CD8-positive, alpha-beta T cell (primary cell): ENCODE measurements at regions of chr22 and their contacts with region 1.

Region 1: DNA sequence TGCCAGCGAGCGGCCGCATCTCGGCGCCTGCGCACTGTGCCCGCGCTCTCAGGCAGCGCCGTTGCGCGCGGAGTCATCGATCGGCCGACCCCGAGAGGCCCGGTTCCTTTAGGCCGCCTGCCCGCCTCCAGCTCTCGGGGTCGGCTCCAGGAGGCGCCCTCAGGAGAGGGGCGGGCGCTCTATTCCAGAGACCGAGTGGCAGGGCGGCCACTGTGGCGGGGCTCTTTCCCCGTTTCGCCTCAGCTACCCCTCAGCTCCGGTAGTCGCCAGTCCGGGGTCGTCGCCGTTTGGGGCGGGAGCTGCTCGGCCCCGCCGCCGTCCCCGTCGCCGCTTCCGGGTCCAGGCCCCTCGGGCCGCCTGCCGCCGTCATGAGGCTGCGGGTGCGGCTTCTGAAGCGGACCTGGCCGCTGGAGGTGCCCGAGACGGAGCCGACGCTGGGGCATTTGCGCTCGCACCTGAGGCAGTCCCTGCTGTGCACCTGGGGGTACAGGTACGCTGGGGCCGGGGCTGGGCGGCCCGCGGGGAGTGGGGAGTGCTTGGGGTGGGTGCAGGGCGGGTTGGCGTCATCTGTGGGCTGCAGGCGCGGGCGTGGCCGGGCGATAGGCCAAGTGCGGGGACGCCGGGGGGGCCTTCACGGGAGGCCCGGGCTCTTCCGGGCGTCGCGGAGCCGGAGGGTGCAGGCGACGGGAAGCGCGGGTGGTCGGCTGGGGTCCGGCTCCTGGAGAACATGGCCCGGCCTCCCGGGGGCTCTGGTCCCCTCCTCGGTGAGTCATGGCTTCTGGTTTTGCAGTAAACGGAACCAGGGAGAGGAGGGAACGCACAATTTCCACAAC is at the start of gene FBXO7:
- DNase-seq: peak; percentile 70 to 95 (median 86)
- ATAC-seq: peak; percentile 86
- H3K4me3 ChIP-seq: peak within 1 kb of the TSS; percentile 83 to 91
- H3K4me3 Mint-ChIP-seq: peak within 1 kb of the TSS; percentile 90
- H3K27ac ChIP-seq: peak within 1 kb of the TSS; percentile 90 to 92
- H3K27ac Mint-ChIP-seq: peak within 1 kb of the TSS; percentile 96
- H3K4me1 ChIP-seq: peaks cover 39% of the 10 kb centered on the region
- H3K4me1 Mint-ChIP-seq: peaks cover 24% of the 10 kb centered on the region
- H3K27me3 ChIP-seq: no peaks in the 10 kb centered on the region
- H3K27me3 Mint-ChIP-seq: no peaks in the 10 kb centered on the region
- CTCF ChIP-seq: peak; percentile 23
- total RNA-seq, gene FBXO7: 172 to 174 TPM

Region 2: DNA sequence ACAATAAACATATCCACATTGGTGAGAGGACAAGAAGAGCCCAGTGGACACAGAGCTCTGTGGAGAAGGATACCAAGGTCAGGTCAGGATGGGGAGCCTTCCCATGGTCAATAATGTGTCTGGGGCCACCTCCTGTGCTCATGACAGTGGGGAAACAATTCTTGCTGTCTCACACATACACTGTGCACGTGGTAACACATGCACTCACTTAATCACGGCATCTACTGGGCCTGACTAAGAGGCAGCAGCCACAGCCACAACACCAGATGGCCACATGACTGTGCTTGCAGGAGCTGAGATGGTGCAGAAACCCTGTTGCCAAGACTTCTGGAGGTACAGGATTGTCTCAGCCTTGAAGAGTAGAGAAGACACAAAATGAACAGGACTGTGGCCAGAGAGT is 344.4 kb before region 1 on chr22:
- CTCF ChIA-PET with region 1: no interaction called
- POLR2A ChIA-PET with region 1: no interaction called
- intact Hi-C with region 1: loop called in 1 of 2 experiments (anchors 10 kb)
- DNase-seq: no peak
- ATAC-seq: no peak
- H3K4me3 ChIP-seq: no peak overlapping the region
- H3K4me3 Mint-ChIP-seq: no peak overlapping the region
- H3K27ac ChIP-seq: no peak overlapping the region
- H3K27ac Mint-ChIP-seq: no peak overlapping the region
- H3K4me1 ChIP-seq: peaks cover 12% of the 10 kb centered on the region
- H3K4me1 Mint-ChIP-seq: peaks cover 7% of the 10 kb centered on the region
- H3K27me3 ChIP-seq: no peaks in the 10 kb centered on the region
- H3K27me3 Mint-ChIP-seq: no peaks in the 10 kb centered on the region
- CTCF ChIP-seq: no peak

Region 3: GRCh38 chr22:32202539-32203180 is 272.2 kb before region 1 on chr22:
- CTCF ChIA-PET with region 1: no interaction called
- POLR2A ChIA-PET with region 1: interaction called, 3 read pairs
- intact Hi-C with region 1: loop called in 1 of 2 experiments (anchors 5 kb)
- DNase-seq: peak in 3 of 9 experiments; percentile 29 to 45 (median 33)
- ATAC-seq: peak; percentile 35
- H3K4me3 ChIP-seq: peak overlapping the region; percentile 35 to 50
- H3K4me3 Mint-ChIP-seq: peak overlapping the region; percentile 66
- H3K27ac ChIP-seq: no peak overlapping the region
- H3K27ac Mint-ChIP-seq: no peak overlapping the region
- H3K4me1 ChIP-seq: peaks cover 26% of the 10 kb centered on the region
- H3K4me1 Mint-ChIP-seq: peaks cover 26% of the 10 kb centered on the region
- H3K27me3 ChIP-seq: peaks cover 2 to 5% of the 10 kb centered on the region in 2 experiments
- H3K27me3 Mint-ChIP-seq: peaks cover 19% of the 10 kb centered on the region
- CTCF ChIP-seq: no peak

Region 4: DNA sequence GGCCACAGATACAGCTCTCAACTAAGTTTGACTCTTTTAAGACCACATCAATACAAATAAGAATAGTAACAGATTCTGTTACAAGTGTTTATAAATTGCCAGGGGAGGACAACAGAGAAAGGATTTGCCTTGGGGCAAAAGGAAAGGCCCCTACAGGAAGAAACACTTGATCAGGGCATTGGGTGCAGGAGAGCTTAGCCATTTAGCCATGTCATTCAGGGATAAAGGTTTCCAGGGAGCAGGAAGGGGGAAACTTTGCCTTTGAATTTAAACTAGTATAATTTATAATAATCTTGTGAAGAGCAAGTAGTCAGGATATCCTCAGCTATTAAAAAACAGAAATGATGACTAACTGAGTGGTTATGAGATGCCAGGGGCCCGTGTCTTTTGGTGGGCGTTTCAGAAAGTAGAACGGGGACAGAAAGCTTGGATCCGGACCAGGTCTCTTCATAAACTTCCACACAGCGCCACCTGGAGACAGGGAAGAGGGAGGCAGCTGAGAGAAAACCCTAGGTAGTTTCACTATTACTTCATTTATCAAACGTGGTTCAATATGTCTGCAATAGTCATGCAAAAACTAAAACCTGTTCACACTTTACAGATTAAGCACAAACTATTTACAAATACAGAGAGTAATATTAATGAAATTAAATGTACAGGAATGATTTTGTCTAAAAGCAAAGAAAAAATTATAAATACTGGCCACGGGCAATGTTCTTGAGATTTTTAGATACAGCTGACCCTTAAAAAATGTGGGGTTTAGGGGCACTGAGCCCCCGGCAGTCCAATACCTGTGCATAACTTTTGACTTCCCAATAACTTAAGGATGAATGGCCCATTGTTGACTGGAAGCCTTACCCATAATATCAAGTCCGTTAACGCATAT is 208.7 kb before region 1 on chr22:
- CTCF ChIA-PET with region 1: no interaction called
- POLR2A ChIA-PET with region 1: no interaction called
- intact Hi-C with region 1: loop called in 1 of 2 experiments (anchors 5 kb)
- DNase-seq: peak; percentile 27 to 76 (median 62)
- ATAC-seq: peak; percentile 63
- H3K4me3 ChIP-seq: no peak overlapping the region
- H3K4me3 Mint-ChIP-seq: no peak overlapping the region
- H3K27ac ChIP-seq: no peak overlapping the region
- H3K27ac Mint-ChIP-seq: no peak overlapping the region
- H3K4me1 ChIP-seq: no peaks in the 10 kb centered on the region
- H3K4me1 Mint-ChIP-seq: peaks cover 7% of the 10 kb centered on the region
- H3K27me3 ChIP-seq: no peaks in the 10 kb centered on the region
- H3K27me3 Mint-ChIP-seq: peaks cover 8% of the 10 kb centered on the region
- CTCF ChIP-seq: peak; percentile 89

Region 5: GRCh38 chr22:32411829-32412592 is 62.8 kb before region 1 on chr22 and contains the start of gene RTCB:
- CTCF ChIA-PET with region 1: interaction called, 7 read pairs
- POLR2A ChIA-PET with region 1: interaction called, 25 read pairs
- intact Hi-C with region 1: loop called (anchors 1 kb)
- DNase-seq: peak; percentile 88 to 96 (median 92)
- ATAC-seq: peak; percentile 88
- H3K4me3 ChIP-seq: peak within 1 kb of the TSS; percentile 82 to 94
- H3K4me3 Mint-ChIP-seq: peak within 1 kb of the TSS; percentile 98
- H3K27ac ChIP-seq: peak within 1 kb of the TSS; percentile 56 to 72
- H3K27ac Mint-ChIP-seq: peak within 1 kb of the TSS; percentile 96
- H3K4me1 ChIP-seq: peaks cover 22% of the 10 kb centered on the region
- H3K4me1 Mint-ChIP-seq: peaks cover 50% of the 10 kb centered on the region
- H3K27me3 ChIP-seq: peaks cover 0 to 2% of the 10 kb centered on the region in 2 experiments
- H3K27me3 Mint-ChIP-seq: peaks cover 3% of the 10 kb centered on the region
- CTCF ChIP-seq: no peak
- total RNA-seq, gene RTCB: 42.8 to 46.5 TPM

Region 6: GRCh38 chr22:33188326-33188725 is 713.5 kb after region 1 on chr22:
- CTCF ChIA-PET with region 1: no interaction called
- POLR2A ChIA-PET with region 1: no interaction called
- intact Hi-C with region 1: no loop called
- DNase-seq: no peak
- ATAC-seq: no peak
- H3K4me3 ChIP-seq: no peak overlapping the region
- H3K4me3 Mint-ChIP-seq: no peak overlapping the region
- H3K27ac ChIP-seq: no peak overlapping the region
- H3K27ac Mint-ChIP-seq: no peak overlapping the region
- H3K4me1 ChIP-seq: no peaks in the 10 kb centered on the region
- H3K4me1 Mint-ChIP-seq: no peaks in the 10 kb centered on the region
- H3K27me3 ChIP-seq: no peaks in the 10 kb centered on the region
- H3K27me3 Mint-ChIP-seq: peaks cover 5% of the 10 kb centered on the region
- CTCF ChIP-seq: no peak